H1 (cell line): ENCODE measurements at regions of chr10 and their contacts with region 1.

Region 1: GRCh38 chr10:30671026-30671616 is 41.6 kb upstream of the LYZL2 start:
- DNase-seq: peak in 1 of 2 experiments; percentile 19
- H3K4me3 ChIP-seq: no peak overlapping the region
- H3K27ac ChIP-seq: no peak overlapping the region
- H3K4me1 ChIP-seq: peaks cover 0 to 5% (median 0%) of the 10 kb centered on the region in 4 experiments; a peak in 1 of 7 replicates
- H3K27me3 ChIP-seq: no peaks in the 10 kb centered on the region; a peak in 1 of 7 replicates
- CTCF ChIP-seq: peak in 2 of 3 experiments; percentile 64 to 73; a peak in 3 of 4 replicates
- EP300 ChIP-seq: no peak
- POLR2A ChIP-seq: no peak
- RAD21 ChIP-seq: peak; percentile 51 to 66

Region 2: GRCh38 chr10:30534465-30535144 is 136.5 kb before region 1 on chr10:
- CTCF ChIA-PET with region 1: no interaction called
- POLR2A ChIA-PET with region 1: no interaction called
- DNase-seq: peak in 1 of 2 experiments; percentile 76
- H3K4me3 ChIP-seq: no peak overlapping the region
- H3K27ac ChIP-seq: no peak overlapping the region
- H3K4me1 ChIP-seq: peaks cover 0 to 9% (median under 1%) of the 10 kb centered on the region in 4 experiments; a peak in 2 of 7 replicates
- H3K27me3 ChIP-seq: no peaks in the 10 kb centered on the region
- CTCF ChIP-seq: peak; percentile 63 to 84 (median 71)
- EP300 ChIP-seq: no peak
- POLR2A ChIP-seq: no peak
- RAD21 ChIP-seq: peak; percentile 87 to 88

Region 3: GRCh38 chr10:30600005-30600404 is 71.1 kb before region 1 on chr10:
- CTCF ChIA-PET with region 1: no interaction called
- POLR2A ChIA-PET with region 1: no interaction called
- DNase-seq: no peak
- H3K4me3 ChIP-seq: no peak overlapping the region
- H3K27ac ChIP-seq: no peak overlapping the region
- H3K4me1 ChIP-seq: peaks cover 3 to 11% (median 6%) of the 10 kb centered on the region in 4 experiments; a peak in 5 of 7 replicates
- H3K27me3 ChIP-seq: peaks cover 8 to 27% (median 15%) of the 10 kb centered on the region in 4 experiments
- CTCF ChIP-seq: no peak
- EP300 ChIP-seq: no peak
- POLR2A ChIP-seq: no peak
- RAD21 ChIP-seq: no peak

Region 4: GRCh38 chr10:30656233-30656632 is 14.9 kb before region 1 on chr10:
- CTCF ChIA-PET with region 1: interaction called, 12 read pairs
- POLR2A ChIA-PET with region 1: no interaction called
- DNase-seq: no peak
- H3K4me3 ChIP-seq: no peak overlapping the region
- H3K27ac ChIP-seq: no peak overlapping the region
- H3K4me1 ChIP-seq: peaks cover 0 to 3% (median 0%) of the 10 kb centered on the region in 4 experiments; a peak in 2 of 7 replicates
- H3K27me3 ChIP-seq: no peaks in the 10 kb centered on the region
- CTCF ChIP-seq: no peak
- EP300 ChIP-seq: no peak
- POLR2A ChIP-seq: no peak
- RAD21 ChIP-seq: no peak